Mammary epithelial cell (primary cell): ENCODE measurements at regions of chr17 and their contacts with region 1.

Region 1: DNA sequence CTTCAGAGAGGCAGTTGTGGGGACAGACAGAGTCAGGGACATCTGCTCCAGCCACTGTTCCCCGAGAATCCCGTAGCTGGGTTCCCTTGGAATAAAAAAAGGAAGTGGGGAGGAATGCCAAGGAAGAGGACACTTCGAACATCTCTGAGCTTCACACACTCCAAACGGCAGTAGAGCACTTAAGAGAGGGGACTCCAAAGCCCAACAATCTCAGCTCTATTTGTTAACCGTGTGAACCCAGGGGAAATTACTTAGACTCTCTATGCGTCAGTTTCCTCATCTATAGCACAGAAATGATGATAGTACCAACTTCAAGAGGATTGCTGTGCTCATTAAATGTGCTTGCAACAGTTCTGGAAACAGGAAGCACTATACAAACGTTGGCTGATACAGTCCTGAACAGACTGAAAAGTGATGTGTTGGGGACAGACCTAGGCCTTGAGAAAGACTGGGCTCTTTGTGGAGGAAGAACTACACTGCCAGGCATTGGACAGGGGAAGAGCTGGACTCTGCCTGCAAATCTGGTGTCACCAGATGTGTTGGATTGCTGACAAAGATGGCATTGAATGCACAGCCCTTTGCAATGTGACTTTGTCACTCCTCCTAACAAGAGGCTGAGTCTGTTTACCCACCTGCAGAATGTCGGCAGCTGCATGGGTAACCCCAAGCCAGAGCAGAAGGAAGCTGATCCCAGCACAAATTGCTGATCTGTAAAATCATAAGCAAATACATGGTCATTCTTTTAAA is 12.2 kb upstream of the ST6GALNAC2 start:
- DNase-seq: peak; percentile 69
- H3K4me3 ChIP-seq: no peak overlapping the region
- H3K27ac ChIP-seq: peak overlapping the region; percentile 82
- H3K4me1 ChIP-seq: peaks cover 61% of the 10 kb centered on the region
- H3K27me3 ChIP-seq: no peaks in the 10 kb centered on the region
- CTCF ChIP-seq: no peak

Region 2: GRCh38 chr17:76452660-76453430 is 145.1 kb before region 1 on chr17 and contains the start of gene UBE2O:
- CTCF ChIA-PET with region 1: interaction called, 28 read pairs
- dilution Hi-C with region 1: no loop called
- in situ Hi-C with region 1: no loop called
- intact Hi-C with region 1: no loop called
- DNase-seq: peak; percentile 76
- H3K4me3 ChIP-seq: peak within 1 kb of the TSS; percentile 74 to 97 (median 91)
- H3K27ac ChIP-seq: peak within 1 kb of the TSS; percentile 58
- H3K4me1 ChIP-seq: peaks cover 18% of the 10 kb centered on the region
- H3K27me3 ChIP-seq: no peaks in the 10 kb centered on the region
- CTCF ChIP-seq: peak; percentile 16 to 36
- total RNA-seq, gene UBE2O: 20.8 to 21.3 TPM

Region 3: DNA sequence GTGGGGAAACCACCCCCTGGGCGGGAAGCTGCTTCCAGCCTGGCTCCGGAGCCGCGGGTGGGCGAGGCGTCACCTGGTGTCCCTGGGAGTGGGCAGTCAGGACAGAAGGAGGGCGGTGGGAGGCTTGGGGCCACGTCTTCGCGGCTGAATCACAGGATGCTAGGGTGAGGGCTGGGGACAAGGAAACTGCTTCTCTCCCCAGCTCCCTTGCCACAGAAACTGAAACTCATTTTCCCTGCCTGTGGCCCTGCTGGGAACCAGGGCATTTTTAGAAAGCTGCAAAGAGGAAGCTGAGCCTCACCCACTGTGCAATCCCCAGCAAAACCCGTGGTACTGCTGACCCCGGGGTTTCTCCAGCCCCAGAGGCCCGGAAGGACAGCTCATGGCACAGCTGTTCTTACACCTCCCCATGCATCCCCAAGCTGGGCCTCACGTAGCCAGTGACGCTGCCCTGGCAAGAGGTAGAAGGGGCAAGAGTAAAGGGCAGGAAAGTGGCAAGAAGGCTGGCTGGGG is 104.9 kb before region 1 on chr17:
- CTCF ChIA-PET with region 1: no interaction called
- dilution Hi-C with region 1: no loop called
- in situ Hi-C with region 1: no loop called
- intact Hi-C with region 1: no loop called
- DNase-seq: peak; percentile 81
- H3K4me3 ChIP-seq: no peak overlapping the region
- H3K27ac ChIP-seq: no peak overlapping the region
- H3K4me1 ChIP-seq: peaks cover 21% of the 10 kb centered on the region
- H3K27me3 ChIP-seq: no peaks in the 10 kb centered on the region
- CTCF ChIP-seq: no peak

Region 4: GRCh38 chr17:76529224-76530094 is 68.4 kb before region 1 on chr17:
- CTCF ChIA-PET with region 1: interaction called, 16 read pairs
- dilution Hi-C with region 1: no loop called
- in situ Hi-C with region 1: no loop called
- intact Hi-C with region 1: no loop called
- DNase-seq: peak; percentile 75
- H3K4me3 ChIP-seq: no peak overlapping the region
- H3K27ac ChIP-seq: peak overlapping the region; percentile 87
- H3K4me1 ChIP-seq: peaks cover 64% of the 10 kb centered on the region
- H3K27me3 ChIP-seq: peaks cover 2% of the 10 kb centered on the region
- CTCF ChIP-seq: no peak

Region 5: DNA sequence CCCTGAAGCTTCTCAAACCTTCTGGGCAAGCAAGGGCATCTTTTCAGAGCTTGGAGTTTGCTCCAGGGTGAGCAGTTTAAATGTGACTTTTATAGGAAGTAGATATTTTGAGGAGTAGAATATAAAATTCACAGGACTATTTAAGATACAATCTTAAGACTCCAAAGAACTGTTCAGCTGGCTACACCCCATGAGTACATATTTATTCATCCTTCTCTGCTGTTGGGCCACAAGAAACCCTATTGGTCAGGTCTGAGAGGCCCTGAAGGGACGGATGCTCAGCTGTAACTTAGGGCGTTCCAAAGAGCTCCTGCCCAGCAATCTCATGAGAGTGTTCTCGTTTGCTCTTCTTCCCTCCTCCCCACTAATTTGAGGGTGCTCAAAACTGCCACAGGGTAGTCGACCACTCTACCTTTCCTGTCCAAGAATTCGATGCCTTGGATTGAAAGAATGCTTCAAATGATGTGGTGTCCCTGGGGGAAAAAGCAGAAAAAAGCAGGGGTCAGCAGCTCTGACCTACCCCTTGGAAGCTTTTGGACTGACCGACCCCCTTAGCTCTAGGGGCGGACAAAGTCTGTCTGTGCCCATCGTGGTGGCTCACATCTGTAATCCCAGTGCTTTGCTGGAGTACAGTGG is 19.4 kb before region 1 on chr17:
- CTCF ChIA-PET with region 1: interaction called, 13 read pairs
- dilution Hi-C with region 1: no loop called
- in situ Hi-C with region 1: no loop called
- intact Hi-C with region 1: loop called (anchors 2 kb)
- DNase-seq: peak; percentile 84
- H3K4me3 ChIP-seq: no peak overlapping the region
- H3K27ac ChIP-seq: peak overlapping the region; percentile 52
- H3K4me1 ChIP-seq: peaks cover 54% of the 10 kb centered on the region
- H3K27me3 ChIP-seq: no peaks in the 10 kb centered on the region
- CTCF ChIP-seq: no peak

Region 6: GRCh38 chr17:76805319-76805718 is 207.4 kb after region 1 on chr17:
- CTCF ChIA-PET with region 1: no interaction called
- dilution Hi-C with region 1: no loop called
- in situ Hi-C with region 1: no loop called
- intact Hi-C with region 1: no loop called
- DNase-seq: peak; percentile 53
- H3K4me3 ChIP-seq: no peak overlapping the region
- H3K27ac ChIP-seq: no peak overlapping the region
- H3K4me1 ChIP-seq: no peaks in the 10 kb centered on the region
- H3K27me3 ChIP-seq: peaks cover 2% of the 10 kb centered on the region
- CTCF ChIP-seq: no peak